ENCODE measurements at regions of chr1 and their contacts with region 1.

Region 1: DNA sequence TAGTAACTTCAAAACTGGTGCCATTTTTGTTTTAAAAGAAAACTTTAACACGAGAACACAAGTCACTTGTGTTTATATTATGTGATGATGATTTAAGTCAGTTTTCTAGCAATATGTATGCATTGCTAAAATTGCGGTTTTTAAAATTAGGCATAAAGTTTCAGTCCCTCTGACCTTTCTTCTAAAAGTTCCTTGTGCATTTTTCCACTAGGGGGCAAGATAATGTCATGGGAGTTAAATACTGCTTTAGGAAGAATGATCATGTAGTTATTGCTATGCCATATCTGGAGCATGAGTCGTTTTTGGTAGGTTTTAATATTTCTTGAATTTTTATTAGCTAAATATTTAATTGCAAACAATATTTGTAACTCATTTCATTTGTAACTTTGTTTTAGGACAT is 10.7 kb downstream of the CDC7 start:
- DNase-seq: no peak
- H3K4me3 ChIP-seq: no peak overlapping the region
- H3K27me3 ChIP-seq: no peaks in the 10 kb centered on the region
- CTCF ChIP-seq: peak; percentile 64

Region 2: DNA sequence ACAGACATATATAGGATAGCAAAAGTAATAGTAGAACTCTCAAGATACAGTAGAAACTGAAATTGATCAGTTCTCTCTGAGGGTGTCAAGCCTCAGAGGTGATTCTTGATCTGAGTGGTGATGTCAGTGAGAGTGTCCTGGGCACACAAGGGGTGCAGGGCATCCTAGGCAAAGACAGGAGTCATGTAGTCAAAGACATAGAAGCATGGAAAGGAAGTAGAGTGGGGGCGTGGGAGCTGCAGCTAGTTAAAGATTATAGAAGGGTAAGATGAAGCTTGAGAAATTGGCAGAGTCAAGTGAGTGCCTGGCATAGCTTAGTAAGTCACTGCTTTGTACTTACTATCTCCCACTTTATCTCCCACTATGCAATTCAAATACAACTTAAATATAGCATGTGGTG is 12.1 kb after region 1 on chr1:
- CTCF ChIA-PET with region 1: interaction called, 11 read pairs
- POLR2A ChIA-PET with region 1: no interaction called
- DNase-seq: no peak
- H3K4me3 ChIP-seq: no peak overlapping the region
- H3K27me3 ChIP-seq: no peaks in the 10 kb centered on the region
- CTCF ChIP-seq: no peak

Region 3: GRCh38 chr1:91885716-91886506 is 374.5 kb after region 1 on chr1 and contains the start of gene TGFBR3:
- CTCF ChIA-PET with region 1: interaction called, 23 read pairs
- POLR2A ChIA-PET with region 1: no interaction called
- DNase-seq: peak; percentile 51
- H3K4me3 ChIP-seq: peak within 1 kb of the TSS; percentile 94
- H3K27me3 ChIP-seq: no peaks in the 10 kb centered on the region
- CTCF ChIP-seq: peak; percentile 68
- polyA plus RNA-seq, gene TGFBR3: 8.2 and 8.3 TPM in 2 replicates

Region 4: GRCh38 chr1:91929250-91929649 is 417.9 kb after region 1 on chr1:
- CTCF ChIA-PET with region 1: interaction called, 172 read pairs
- POLR2A ChIA-PET with region 1: no interaction called
- DNase-seq: no peak
- H3K4me3 ChIP-seq: no peak overlapping the region
- H3K27me3 ChIP-seq: no peaks in the 10 kb centered on the region
- CTCF ChIP-seq: no peak